GM12878 (cell line): ENCODE measurements at regions of chr5 and their contacts with region 1.

Region 1: DNA sequence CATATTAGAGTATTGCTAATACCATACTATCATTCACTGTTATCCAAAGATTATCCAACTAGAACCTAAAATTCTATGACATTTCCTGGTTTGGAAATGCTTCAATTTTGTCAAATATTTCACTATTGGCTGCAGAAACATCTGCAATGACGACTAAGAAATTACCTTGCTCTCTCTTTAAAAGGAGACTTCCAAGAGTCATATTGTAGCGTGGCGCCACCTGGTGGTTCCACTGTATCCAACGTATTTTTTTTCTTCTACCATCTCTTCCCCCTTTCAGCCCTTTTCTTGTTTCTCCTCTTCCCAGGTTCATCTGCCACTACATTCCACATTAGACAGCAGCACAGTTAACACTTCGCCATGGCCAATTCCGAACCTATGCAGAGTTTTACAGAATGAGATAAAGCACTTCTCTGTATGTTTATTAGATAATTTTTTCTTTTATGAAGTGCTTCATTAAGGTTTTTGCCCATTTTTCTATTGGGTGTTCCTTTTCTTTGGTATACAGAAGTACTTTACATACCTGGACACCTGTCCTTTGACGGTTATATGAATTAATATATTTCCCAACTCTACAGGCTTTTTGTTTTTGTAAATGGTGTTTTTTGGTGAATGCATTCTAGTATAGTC is 153.5 kb downstream of the CDC42SE2 start:
- DNase-seq: peak; percentile 34
- ATAC-seq: peak; percentile 65
- H3K4me3 ChIP-seq: no peak overlapping the region
- H3K27ac ChIP-seq: no peak overlapping the region
- H3K4me1 ChIP-seq: peaks cover 18% of the 10 kb centered on the region
- H3K27me3 ChIP-seq: no peaks in the 10 kb centered on the region
- CTCF ChIP-seq: peak; percentile 65 to 77 (median 75)
- EP300 ChIP-seq: no peak
- POLR2A ChIP-seq: no peak
- RAD21 ChIP-seq: peak; percentile 82

Region 2: DNA sequence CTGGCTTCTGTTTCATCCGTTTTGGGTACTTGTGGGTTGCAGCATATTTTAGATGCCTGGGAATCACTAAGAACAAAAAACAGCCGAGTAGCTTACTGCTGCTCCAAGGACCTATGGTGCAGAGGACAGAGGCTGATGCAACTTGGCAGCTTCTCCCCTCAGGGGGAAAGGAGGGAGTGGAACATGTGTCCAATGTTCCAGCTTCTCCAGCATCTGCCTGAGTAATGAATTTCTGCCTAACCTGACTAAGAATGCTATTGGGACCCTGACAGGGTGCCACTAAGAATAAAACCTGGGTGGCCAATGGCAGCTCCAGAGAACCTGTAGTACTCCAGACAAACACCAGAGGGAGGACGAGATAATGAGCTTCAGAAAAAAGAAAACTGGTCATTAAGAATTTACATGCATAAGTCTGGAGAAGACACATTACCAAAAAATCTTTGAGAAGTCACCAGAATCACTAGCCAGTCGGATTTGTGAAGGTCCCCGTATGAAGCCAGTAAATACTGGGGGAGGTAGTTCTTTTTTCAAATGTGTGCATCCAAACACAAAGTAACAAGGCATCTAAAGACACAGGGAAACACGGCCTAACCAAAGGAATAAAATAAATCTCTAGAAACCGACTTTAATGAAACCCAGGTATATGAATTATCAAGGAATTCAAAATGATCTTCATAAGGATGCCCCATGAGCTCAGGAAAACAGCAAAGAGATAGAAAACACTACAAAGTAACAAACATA is 545.8 kb before region 1 on chr5:
- CTCF ChIA-PET with region 1: interaction called, 7 read pairs
- POLR2A ChIA-PET with region 1: no interaction called
- RAD21 ChIA-PET with region 1: interaction called, 17 read pairs
- SMC1A ChIA-PET with region 1: interaction called, 4 read pairs
- in situ Hi-C with region 1: loop called (anchors 10 kb)
- intact Hi-C with region 1: loop called (anchors 1 kb)
- DNase-seq: no peak
- ATAC-seq: peak; percentile 86
- H3K4me3 ChIP-seq: no peak overlapping the region
- H3K27ac ChIP-seq: no peak overlapping the region
- H3K4me1 ChIP-seq: no peaks in the 10 kb centered on the region
- H3K27me3 ChIP-seq: no peaks in the 10 kb centered on the region
- CTCF ChIP-seq: peak; percentile 64 to 66 (median 65)
- EP300 ChIP-seq: no peak
- POLR2A ChIP-seq: no peak
- RAD21 ChIP-seq: peak; percentile 63

Region 3: DNA sequence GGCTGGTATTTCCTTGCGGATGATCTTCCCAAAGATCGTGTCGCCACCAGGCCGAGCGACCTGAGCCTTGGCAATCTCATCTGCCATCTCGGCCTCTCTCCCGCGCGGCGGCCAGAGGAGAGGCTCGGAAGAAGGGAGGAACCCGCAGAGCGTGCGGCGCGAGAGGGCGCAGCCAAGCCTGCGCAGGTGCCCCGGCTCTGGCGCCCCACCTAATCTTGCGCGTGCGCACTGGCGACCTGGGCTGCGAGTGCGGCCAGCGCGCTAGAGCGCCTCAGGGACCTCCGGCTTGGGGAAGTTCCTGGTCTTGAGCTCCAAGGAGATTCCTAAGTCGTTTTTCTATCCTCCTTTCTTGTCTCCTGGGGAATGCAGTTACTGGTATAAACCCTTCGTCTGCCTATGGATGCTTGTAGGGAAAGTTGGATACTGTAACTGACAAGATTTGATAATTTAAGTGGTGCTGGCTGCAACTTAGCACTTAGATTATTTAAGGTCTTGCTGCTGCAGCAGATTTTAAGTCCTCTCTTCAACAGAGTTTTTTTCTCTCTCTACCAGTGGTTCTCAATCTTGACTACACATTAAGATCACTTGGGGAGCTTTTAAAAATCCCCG is 252.1 kb before region 1 on chr5 and contains the start of gene HINT1:
- CTCF ChIA-PET with region 1: interaction called, 7 read pairs
- POLR2A ChIA-PET with region 1: interaction called, 3 read pairs
- RAD21 ChIA-PET with region 1: interaction called, 3 read pairs
- SMC1A ChIA-PET with region 1: interaction called, 5 read pairs
- in situ Hi-C with region 1: no loop called
- intact Hi-C with region 1: loop called (anchors 2 kb)
- DNase-seq: peak; percentile 75
- ATAC-seq: peak; percentile 90
- H3K4me3 ChIP-seq: peak within 1 kb of the TSS; percentile 92
- H3K27ac ChIP-seq: peak within 1 kb of the TSS; percentile 86
- H3K4me1 ChIP-seq: peaks cover 3% of the 10 kb centered on the region; the same call in 1 of the 2 replicates
- H3K27me3 ChIP-seq: no peaks in the 10 kb centered on the region
- CTCF ChIP-seq: peak in 2 of 3 experiments; percentile 18 to 45; a peak in 4 of 6 replicates
- EP300 ChIP-seq: no peak
- POLR2A ChIP-seq: peak; percentile 85
- RAD21 ChIP-seq: peak; percentile 38; the same call in 1 of the 2 replicates
- polyA plus RNA-seq, gene HINT1: 844 to 901 TPM

Region 4: GRCh38 chr5:131224387-131225201 is 192.8 kb before region 1 on chr5:
- CTCF ChIA-PET with region 1: interaction called, 3 read pairs
- POLR2A ChIA-PET with region 1: no interaction called
- RAD21 ChIA-PET with region 1: interaction called, 3 read pairs
- SMC1A ChIA-PET with region 1: interaction called, 6 read pairs
- in situ Hi-C with region 1: no loop called
- intact Hi-C with region 1: loop called (anchors 2 kb)
- DNase-seq: peak; percentile 96
- ATAC-seq: peak; percentile 82
- H3K4me3 ChIP-seq: peak overlapping the region; percentile 64
- H3K27ac ChIP-seq: peak overlapping the region; percentile 78
- H3K4me1 ChIP-seq: peaks cover 30% of the 10 kb centered on the region
- H3K27me3 ChIP-seq: no peaks in the 10 kb centered on the region
- CTCF ChIP-seq: no peak
- EP300 ChIP-seq: peak; percentile 94 to 96
- POLR2A ChIP-seq: peak; percentile 75
- RAD21 ChIP-seq: no peak; the same call in 1 of the 2 replicates

Region 5: DNA sequence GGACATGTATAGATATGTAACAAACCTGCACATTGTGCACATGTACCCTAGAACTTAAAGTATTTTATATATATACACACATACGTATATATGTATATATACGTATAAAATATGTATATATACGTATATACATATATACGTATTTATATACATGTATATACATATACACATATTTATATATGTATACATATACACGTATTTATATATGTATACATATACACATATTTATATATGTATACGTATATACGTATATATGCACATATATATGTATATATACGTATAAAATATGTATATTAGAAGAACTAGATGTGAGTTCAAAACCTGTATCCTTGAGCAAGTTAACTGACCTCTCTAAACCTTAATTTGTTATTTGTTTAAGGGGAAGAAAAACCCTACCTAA is 318.0 kb after region 1 on chr5:
- CTCF ChIA-PET with region 1: no interaction called
- POLR2A ChIA-PET with region 1: no interaction called
- RAD21 ChIA-PET with region 1: no interaction called
- SMC1A ChIA-PET with region 1: no interaction called
- in situ Hi-C with region 1: no loop called
- intact Hi-C with region 1: no loop called
- DNase-seq: no peak
- ATAC-seq: no peak
- H3K4me3 ChIP-seq: no peak overlapping the region
- H3K27ac ChIP-seq: no peak overlapping the region
- H3K4me1 ChIP-seq: no peaks in the 10 kb centered on the region
- H3K27me3 ChIP-seq: no peaks in the 10 kb centered on the region
- CTCF ChIP-seq: no peak
- EP300 ChIP-seq: no peak
- POLR2A ChIP-seq: no peak
- RAD21 ChIP-seq: no peak